Right cardiac atrium (tissue), 5 donors: ENCODE measurements at regions of chr15 and their contacts with region 1.

Region 1: DNA sequence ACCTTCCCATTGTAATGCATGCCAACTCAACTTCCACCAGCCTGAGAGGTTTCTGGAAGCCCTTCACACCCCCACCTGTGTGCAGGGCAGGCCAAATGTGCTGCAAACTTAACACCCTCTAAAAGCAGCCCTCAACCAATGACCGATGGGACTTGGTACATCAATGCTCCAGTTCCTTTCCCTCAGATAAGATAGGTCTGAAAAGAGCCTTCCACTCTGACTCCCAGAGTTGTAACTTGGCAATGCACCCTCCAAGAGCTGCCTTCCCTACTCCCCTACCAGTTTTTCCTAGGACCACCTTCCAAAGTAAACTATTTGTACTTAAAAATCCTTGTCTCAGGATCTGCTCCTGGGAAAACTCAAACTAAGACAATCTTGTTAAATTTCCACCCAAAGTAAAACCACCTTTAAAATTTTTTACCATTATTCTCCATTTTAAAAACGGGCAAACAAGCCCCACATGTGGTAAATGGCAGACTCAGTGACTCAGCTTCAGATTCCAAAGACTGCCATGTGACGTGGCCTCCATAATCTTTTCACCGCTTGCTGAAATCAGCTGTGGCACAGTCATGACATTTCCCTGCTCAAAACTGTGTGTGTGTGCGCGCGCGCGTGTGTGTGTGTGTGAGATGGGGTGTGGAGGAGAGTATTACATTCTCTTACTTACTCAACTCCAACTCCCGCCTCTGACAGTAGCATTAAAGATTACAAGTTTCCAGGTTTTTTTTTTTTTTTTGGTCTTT is 17.2 kb downstream of the RASGRP1 start:
- DNase-seq: peak in 1 of 3 donors; percentile 31
- ATAC-seq: no peak
- H3K4me3 ChIP-seq: no peak overlapping the region
- H3K27ac ChIP-seq: no peak overlapping the region
- H3K4me1 ChIP-seq: no peaks in the 10 kb centered on the region
- H3K27me3 ChIP-seq: no peaks in the 10 kb centered on the region

Region 2: DNA sequence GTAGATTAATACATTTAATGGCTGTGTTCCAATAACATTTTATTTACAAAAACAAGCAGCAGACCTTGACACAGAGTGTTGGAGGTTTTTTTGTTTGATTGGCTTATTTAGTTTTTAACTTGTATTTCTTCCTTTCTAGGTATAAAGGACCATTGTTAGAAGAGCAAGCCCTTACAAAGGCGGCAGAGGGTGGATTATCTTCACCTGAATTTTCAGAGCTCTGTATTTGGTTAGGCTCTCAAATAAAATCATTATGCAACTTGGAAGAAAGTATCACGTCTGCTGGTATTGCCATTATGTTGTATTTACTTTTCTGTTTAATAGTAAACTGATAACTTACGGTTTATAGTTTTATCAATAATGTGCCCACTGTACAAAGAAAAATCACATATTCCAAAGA is 83.5 kb before region 1 on chr15:
- intact Hi-C with region 1: no loop called
- DNase-seq: no peak
- ATAC-seq: no peak
- H3K4me3 ChIP-seq: no peak overlapping the region
- H3K27ac ChIP-seq: no peak overlapping the region
- H3K4me1 ChIP-seq: no peaks in the 10 kb centered on the region
- H3K27me3 ChIP-seq: no peaks in the 10 kb centered on the region

Region 3: DNA sequence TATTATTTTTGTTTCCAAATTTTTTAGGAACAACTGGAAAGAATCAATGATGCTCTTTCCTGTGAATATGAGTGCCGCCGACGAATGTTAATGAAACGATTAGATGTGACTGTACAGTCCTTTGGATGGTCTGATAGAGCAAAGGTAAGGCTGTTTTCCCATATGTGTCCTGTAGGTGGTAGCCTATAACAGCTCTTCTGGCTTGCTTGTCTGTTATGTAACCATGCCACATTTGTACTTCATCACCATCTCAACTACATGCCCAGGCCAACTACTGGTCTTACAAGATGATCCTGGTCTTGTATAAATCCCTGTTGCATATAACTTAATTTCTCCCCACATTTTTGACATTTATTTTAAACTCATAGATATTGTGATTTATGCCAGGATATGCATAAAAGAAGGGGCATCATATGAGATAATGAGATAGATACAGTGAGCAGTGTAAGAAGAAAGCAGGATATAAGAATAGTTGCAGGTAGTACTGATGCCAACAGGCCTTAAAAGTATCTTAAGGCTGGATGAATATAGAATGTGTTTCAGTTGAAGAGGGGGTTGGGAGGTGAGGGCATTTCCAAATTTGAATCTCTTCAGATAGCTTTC is 73.2 kb before region 1 on chr15:
- intact Hi-C with region 1: loop called in 1 of 4 experiments (anchors 10 kb)
- DNase-seq: no peak
- ATAC-seq: peak; percentile 81 to 86
- H3K4me3 ChIP-seq: no peak overlapping the region
- H3K27ac ChIP-seq: no peak overlapping the region
- H3K4me1 ChIP-seq: no peaks in the 10 kb centered on the region
- H3K27me3 ChIP-seq: no peaks in the 10 kb centered on the region

Region 4: DNA sequence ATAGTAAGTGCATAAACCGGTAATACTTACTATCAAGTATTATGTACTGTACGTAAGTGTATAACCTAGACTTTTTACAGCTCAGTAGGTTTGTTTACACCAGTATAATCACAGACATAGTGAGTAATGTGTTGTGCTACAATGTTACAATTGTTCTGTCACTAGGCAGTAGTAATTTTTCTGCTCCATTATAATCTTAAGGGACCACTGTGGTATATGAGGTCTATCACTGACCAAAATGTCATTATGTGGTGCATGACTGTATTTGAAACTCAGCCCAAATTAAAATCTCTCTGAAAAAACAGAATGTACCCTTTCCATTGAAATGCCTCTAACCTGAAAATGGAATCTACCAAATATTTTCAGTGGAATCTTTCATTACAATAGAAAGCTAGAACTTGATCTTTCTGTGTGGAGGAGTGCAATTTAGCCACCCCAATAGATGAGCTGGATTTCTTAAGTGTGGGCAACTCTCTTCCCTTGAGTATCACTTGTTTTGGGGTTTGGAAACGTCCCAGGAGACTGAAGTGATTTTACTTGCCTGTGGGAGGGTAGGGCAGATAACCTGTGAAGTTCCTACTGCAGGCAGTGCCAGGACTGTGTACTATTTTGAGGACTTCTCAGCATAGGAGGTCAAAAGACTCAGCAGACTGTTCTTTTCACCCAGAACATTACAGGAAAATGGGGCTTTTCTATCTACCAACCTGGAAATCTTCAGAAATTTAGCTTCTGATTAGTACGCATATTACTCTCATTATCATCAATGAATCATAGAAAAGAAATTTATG is 42.6 kb before region 1 on chr15:
- intact Hi-C with region 1: no loop called
- DNase-seq: no peak
- ATAC-seq: peak; percentile 29 to 54
- H3K4me3 ChIP-seq: no peak overlapping the region
- H3K27ac ChIP-seq: no peak overlapping the region
- H3K4me1 ChIP-seq: no peaks in the 10 kb centered on the region
- H3K27me3 ChIP-seq: no peaks in the 10 kb centered on the region

Region 5: GRCh38 chr15:38517312-38517975 is 30.0 kb before region 1 on chr15:
- intact Hi-C with region 1: no loop called
- DNase-seq: no peak
- ATAC-seq: no peak
- H3K4me3 ChIP-seq: no peak overlapping the region
- H3K27ac ChIP-seq: no peak overlapping the region
- H3K4me1 ChIP-seq: no peaks in the 10 kb centered on the region
- H3K27me3 ChIP-seq: no peaks in the 10 kb centered on the region